ENCODE measurements at regions of chr12 and their contacts with region 1.

Region 1: GRCh38 chr12:7638760-7639555 is 26.8 kb downstream of the APOBEC1 start:
- DNase-seq: peak; percentile 20
- ATAC-seq: peak; percentile 94
- H3K4me3 ChIP-seq: 0 out of 4 replicates have a peak overlapping the region, but pooled peaks of 1 of the 2 experiments have one; percentile 15
- H3K27ac ChIP-seq: no peak overlapping the region
- H3K4me1 ChIP-seq: no peaks in the 10 kb centered on the region
- H3K27me3 ChIP-seq: no peaks in the 10 kb centered on the region
- CTCF ChIP-seq: peak; percentile 68

Region 2: GRCh38 chr12:7142056-7142644 is 496.8 kb before region 1 on chr12:
- CTCF ChIA-PET with region 1: no interaction called
- POLR2A ChIA-PET with region 1: no interaction called
- in situ Hi-C with region 1: no loop called
- intact Hi-C with region 1: loop called (anchors 5 kb)
- DNase-seq: peak; percentile 18
- ATAC-seq: peak; percentile 88
- H3K4me3 ChIP-seq: no peak overlapping the region
- H3K27ac ChIP-seq: no peak overlapping the region
- H3K4me1 ChIP-seq: no peaks in the 10 kb centered on the region
- H3K27me3 ChIP-seq: no peaks in the 10 kb centered on the region
- CTCF ChIP-seq: peak; percentile 81

Region 3: GRCh38 chr12:7219599-7220243 is 419.2 kb before region 1 on chr12:
- CTCF ChIA-PET with region 1: no interaction called
- POLR2A ChIA-PET with region 1: no interaction called
- in situ Hi-C with region 1: no loop called
- intact Hi-C with region 1: loop called (anchors 5 kb)
- DNase-seq: peak; percentile 61
- ATAC-seq: peak; percentile 81
- H3K4me3 ChIP-seq: no peak overlapping the region
- H3K27ac ChIP-seq: no peak overlapping the region
- H3K4me1 ChIP-seq: no peaks in the 10 kb centered on the region
- H3K27me3 ChIP-seq: no peaks in the 10 kb centered on the region
- CTCF ChIP-seq: peak; percentile 76

Region 4: GRCh38 chr12:7583571-7583970 is 55.4 kb before region 1 on chr12:
- CTCF ChIA-PET with region 1: no interaction called
- POLR2A ChIA-PET with region 1: no interaction called
- in situ Hi-C with region 1: no loop called
- intact Hi-C with region 1: loop called (anchors 5 kb)
- DNase-seq: no peak
- ATAC-seq: no peak
- H3K4me3 ChIP-seq: no peak overlapping the region
- H3K27ac ChIP-seq: no peak overlapping the region
- H3K4me1 ChIP-seq: no peaks in the 10 kb centered on the region
- H3K27me3 ChIP-seq: no peaks in the 10 kb centered on the region
- CTCF ChIP-seq: no peak